ENCODE measurements at regions of chr2 and their contacts with region 1.

Region 1: DNA sequence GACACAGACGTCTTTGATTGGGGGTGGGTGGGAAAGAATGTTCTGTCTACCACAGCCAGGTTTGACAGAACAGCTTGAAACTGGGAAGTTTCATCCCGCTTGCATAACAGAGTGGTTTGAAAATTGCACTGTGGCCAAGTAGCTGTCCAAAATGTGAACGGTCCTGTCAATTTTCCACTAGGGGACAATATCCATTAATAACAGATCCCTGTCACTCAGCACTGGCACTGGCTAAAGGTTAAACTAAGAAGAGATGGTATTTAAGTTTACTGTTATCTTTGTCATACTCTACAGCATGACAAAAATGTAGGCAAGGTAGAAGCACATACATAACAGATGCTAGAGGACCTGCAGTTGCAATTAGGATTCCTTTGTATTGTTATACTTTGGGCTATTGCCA is 55.6 kb upstream of the ACMSD start:
- DNase-seq: no peak
- ATAC-seq: peak; percentile 66
- H3K4me3 Mint-ChIP-seq: no peak overlapping the region
- H3K27ac Mint-ChIP-seq: no peak overlapping the region
- H3K4me1 Mint-ChIP-seq: peaks cover 8% of the 10 kb centered on the region
- H3K27me3 Mint-ChIP-seq: no peaks in the 10 kb centered on the region
- CTCF ChIP-seq: peak; percentile 47

Region 2: DNA sequence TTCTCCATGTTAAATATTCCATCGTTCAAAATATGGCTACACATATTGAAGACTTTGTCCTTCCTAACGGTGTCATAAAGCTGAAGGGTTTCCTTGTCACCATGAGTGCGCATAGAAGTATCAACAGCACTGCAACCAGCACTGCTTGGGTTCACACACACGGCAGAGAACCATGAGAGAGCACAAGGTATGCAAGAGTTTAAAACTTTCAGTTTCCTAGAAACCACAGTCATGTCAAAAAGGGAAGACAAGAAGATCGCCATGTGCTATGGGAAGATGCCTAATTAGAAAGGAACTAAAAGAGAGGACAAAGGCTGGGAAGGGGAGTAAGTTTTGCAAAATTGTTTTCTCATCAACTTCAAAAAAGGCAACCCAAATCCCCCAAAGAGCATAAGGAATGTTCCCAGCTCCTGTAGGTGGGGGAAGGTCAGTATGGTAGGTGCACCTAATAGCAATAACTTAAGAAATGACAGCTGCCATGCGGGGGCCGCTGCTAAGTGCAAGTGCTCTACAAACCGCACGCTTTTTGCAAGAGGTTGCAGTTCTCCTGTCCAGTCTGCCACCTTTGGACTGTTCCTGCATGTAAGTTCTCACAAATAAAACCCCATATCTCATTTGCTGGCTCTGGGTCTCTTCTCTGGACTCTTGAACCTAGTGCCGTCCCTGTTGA is 200.8 kb before region 1 on chr2:
- CTCF ChIA-PET with region 1: no interaction called
- POLR2A ChIA-PET with region 1: no interaction called
- intact Hi-C with region 1: loop called (anchors 10 kb)
- DNase-seq: no peak
- ATAC-seq: peak; percentile 26
- H3K4me3 Mint-ChIP-seq: peak overlapping the region; percentile 22
- H3K27ac Mint-ChIP-seq: peak overlapping the region; percentile 80
- H3K4me1 Mint-ChIP-seq: peaks cover 39% of the 10 kb centered on the region
- H3K27me3 Mint-ChIP-seq: no peaks in the 10 kb centered on the region
- CTCF ChIP-seq: no peak

Region 3: GRCh38 chr2:134712297-134712696 is 70.5 kb before region 1 on chr2:
- CTCF ChIA-PET with region 1: interaction called, 4 read pairs
- POLR2A ChIA-PET with region 1: no interaction called
- intact Hi-C with region 1: loop called (anchors 2 kb)
- DNase-seq: no peak
- ATAC-seq: no peak
- H3K4me3 Mint-ChIP-seq: peak overlapping the region; percentile 57
- H3K27ac Mint-ChIP-seq: no peak overlapping the region
- H3K4me1 Mint-ChIP-seq: peaks cover 47% of the 10 kb centered on the region
- H3K27me3 Mint-ChIP-seq: peaks cover 13% of the 10 kb centered on the region
- CTCF ChIP-seq: no peak

Region 4: GRCh38 chr2:134727385-134727784 is 55.4 kb before region 1 on chr2:
- CTCF ChIA-PET with region 1: no interaction called
- POLR2A ChIA-PET with region 1: no interaction called
- intact Hi-C with region 1: no loop called
- DNase-seq: no peak
- ATAC-seq: no peak
- H3K4me3 Mint-ChIP-seq: no peak overlapping the region
- H3K27ac Mint-ChIP-seq: no peak overlapping the region
- H3K4me1 Mint-ChIP-seq: no peaks in the 10 kb centered on the region
- H3K27me3 Mint-ChIP-seq: peaks cover 6% of the 10 kb centered on the region
- CTCF ChIP-seq: no peak

Measured in activated B cell treated with CpG ODN at 0.5 μM for 24 hours (primary cell).